ENCODE measurements at regions of chr2 and their contacts with region 1.

Region 1: DNA sequence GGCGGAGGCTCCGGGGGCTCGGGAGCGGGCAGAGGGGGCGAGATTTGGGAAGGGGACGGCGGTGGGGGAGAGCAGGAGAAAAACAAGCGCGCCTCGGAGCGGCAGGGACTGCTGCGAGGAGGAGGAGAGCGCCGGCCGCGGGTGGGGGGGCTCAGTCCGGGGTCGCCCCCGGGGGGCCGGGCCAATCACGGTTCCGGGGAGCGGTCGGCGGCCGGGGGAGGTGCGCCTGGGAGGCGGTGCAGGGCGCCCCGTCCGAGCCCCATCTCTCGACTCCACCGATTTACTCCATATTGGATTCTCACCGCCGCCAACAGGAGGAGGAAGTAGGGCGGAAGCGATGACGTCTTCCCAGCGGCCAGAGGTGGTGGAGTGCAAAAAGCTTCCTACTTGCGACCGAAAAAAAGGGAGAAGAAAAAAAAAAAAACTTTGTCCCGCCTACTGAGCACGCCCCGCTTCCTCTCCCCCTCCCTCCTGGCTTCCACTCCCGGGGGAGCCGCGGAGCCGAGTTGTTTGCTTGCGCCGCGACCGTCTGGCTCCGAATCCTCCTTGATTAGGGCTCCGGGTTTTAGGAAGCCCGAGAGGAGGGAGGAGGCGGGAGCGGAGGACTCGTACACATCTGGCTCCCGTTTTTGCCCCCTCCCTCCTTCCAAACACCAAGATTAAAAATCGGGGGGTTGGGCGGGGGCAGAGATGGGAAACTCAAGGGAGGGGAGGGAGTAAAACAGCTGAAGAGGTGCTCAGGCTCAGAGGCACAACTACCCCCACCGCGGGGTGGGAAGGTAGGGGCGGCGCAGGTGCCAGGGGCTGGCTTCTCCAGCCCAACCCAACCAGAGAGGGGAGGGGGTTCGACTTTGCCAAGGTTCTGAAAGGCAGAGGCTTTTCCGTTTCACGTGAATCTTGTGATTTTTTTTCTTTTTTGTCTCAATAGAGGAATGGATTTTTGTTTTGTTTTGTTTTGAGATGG is at the start of gene SPRED2:
- DNase-seq: no peak
- ATAC-seq: peak; percentile 38
- H3K4me3 ChIP-seq: peak within 1 kb of the TSS; percentile 80
- H3K27ac ChIP-seq: peak within 1 kb of the TSS; percentile 43
- H3K4me1 ChIP-seq: peaks cover 6% of the 10 kb centered on the region
- H3K27me3 ChIP-seq: no peaks in the 10 kb centered on the region
- CTCF ChIP-seq: no peak
- EP300 ChIP-seq: no peak
- POLR2A ChIP-seq: no peak; the same call in 1 of the 2 replicates
- RAD21 ChIP-seq: 0 out of 2 replicates have a peak, but pooled peaks have one; percentile 18
- polyA plus RNA-seq, gene SPRED2: 3.0 to 3.2 TPM

Region 2: GRCh38 chr2:65300761-65301711 is 131.5 kb before region 1 on chr2:
- CTCF ChIA-PET with region 1: interaction called, 4 read pairs
- POLR2A ChIA-PET with region 1: no interaction called
- RAD21 ChIA-PET with region 1: interaction called, 4 read pairs
- SMC1A ChIA-PET with region 1: interaction called, 22 read pairs
- in situ Hi-C with region 1: no loop called
- intact Hi-C with region 1: no loop called
- DNase-seq: peak; percentile 61
- ATAC-seq: peak; percentile 84
- H3K4me3 ChIP-seq: peak overlapping the region; percentile 17; the same call in 1 of the 2 replicates
- H3K27ac ChIP-seq: peak overlapping the region; percentile 38
- H3K4me1 ChIP-seq: peaks cover 40% of the 10 kb centered on the region
- H3K27me3 ChIP-seq: no peaks in the 10 kb centered on the region
- CTCF ChIP-seq: no peak
- EP300 ChIP-seq: no peak
- POLR2A ChIP-seq: no peak
- RAD21 ChIP-seq: no peak

Region 3: DNA sequence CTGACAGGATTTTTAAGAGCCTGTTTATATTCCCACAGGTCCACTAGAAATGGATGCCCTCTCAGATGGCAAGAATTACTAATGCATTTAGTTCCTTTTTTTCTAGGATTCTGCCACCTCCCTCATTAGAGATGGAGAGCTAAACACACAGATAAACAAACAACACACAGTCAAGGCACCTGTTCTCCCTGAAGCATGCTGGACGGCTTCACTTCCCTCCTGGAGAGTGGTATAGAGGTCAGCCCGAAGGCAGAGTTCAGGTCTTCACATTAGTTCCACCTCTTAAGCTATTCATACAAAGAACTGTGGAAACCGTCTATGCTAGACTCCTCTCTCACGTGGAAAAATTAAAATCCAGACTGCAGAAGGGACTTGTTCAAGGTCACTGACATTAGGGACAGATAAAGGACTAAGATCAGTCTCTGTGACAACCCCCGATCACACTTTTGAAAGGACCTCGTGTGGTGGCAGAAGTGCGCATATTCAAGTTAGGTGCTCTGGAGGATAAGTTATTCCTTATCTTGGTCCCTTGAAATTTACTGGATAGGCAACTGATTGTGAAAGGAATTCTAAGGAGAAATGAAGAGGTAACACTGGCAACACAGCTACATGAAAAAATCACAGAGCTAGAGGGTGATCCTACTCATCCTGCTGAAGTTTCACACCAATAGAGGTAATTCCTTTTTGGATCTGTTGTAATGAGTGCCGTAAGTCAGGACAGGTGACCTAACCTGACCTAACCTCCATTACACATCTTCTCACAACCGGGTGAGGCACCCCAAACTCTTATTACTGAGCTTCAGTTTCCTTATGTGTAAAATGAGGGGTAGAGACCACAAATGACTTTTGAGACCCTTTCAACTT is 75.2 kb before region 1 on chr2:
- CTCF ChIA-PET with region 1: interaction called, 3 read pairs
- POLR2A ChIA-PET with region 1: interaction called, 4 read pairs
- RAD21 ChIA-PET with region 1: interaction called, 12 read pairs
- SMC1A ChIA-PET with region 1: interaction called, 8 read pairs
- in situ Hi-C with region 1: no loop called
- intact Hi-C with region 1: loop called (anchors 2 kb)
- DNase-seq: no peak
- ATAC-seq: peak; percentile 75
- H3K4me3 ChIP-seq: 0 out of 2 replicates have a peak overlapping the region, but pooled peaks have one; percentile 38
- H3K27ac ChIP-seq: peak overlapping the region; percentile 75
- H3K4me1 ChIP-seq: peaks cover 41% of the 10 kb centered on the region
- H3K27me3 ChIP-seq: no peaks in the 10 kb centered on the region
- CTCF ChIP-seq: no peak
- EP300 ChIP-seq: no peak
- POLR2A ChIP-seq: no peak
- RAD21 ChIP-seq: no peak

Region 4: GRCh38 chr2:65396348-65397026 is 36.0 kb before region 1 on chr2:
- CTCF ChIA-PET with region 1: interaction called, 3 read pairs
- POLR2A ChIA-PET with region 1: interaction called, 5 read pairs
- RAD21 ChIA-PET with region 1: interaction called, 10 read pairs
- SMC1A ChIA-PET with region 1: interaction called, 13 read pairs
- in situ Hi-C with region 1: no loop called
- intact Hi-C with region 1: no loop called
- DNase-seq: no peak
- ATAC-seq: peak; percentile 31
- H3K4me3 ChIP-seq: no peak overlapping the region
- H3K27ac ChIP-seq: peak overlapping the region; percentile 22
- H3K4me1 ChIP-seq: peaks cover 53% of the 10 kb centered on the region
- H3K27me3 ChIP-seq: no peaks in the 10 kb centered on the region
- CTCF ChIP-seq: no peak
- EP300 ChIP-seq: no peak
- POLR2A ChIP-seq: no peak
- RAD21 ChIP-seq: no peak

Region 5: DNA sequence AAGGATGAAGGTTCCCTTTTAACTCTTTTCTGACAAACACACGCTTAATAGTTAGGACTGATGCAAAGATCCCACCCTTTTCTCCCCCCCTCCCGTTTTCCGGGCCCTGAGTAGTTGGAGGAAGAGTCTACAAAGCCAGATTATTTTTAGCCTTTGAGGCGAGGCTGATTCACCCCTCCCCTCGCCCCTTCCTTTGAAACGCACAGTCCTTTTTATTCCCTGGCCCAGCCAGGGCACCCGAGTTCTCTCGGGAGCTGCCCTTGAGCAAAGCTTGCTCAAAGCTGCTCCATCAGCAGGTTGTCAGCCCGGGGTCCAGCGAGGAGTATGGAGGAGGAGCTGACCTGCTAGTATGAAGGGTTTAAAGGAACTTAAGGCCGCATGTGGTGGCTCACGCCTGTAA is 47.0 kb after region 1 on chr2:
- CTCF ChIA-PET with region 1: no interaction called
- POLR2A ChIA-PET with region 1: no interaction called
- RAD21 ChIA-PET with region 1: no interaction called
- SMC1A ChIA-PET with region 1: no interaction called
- in situ Hi-C with region 1: no loop called
- intact Hi-C with region 1: no loop called
- DNase-seq: no peak
- ATAC-seq: no peak
- H3K4me3 ChIP-seq: no peak overlapping the region
- H3K27ac ChIP-seq: no peak overlapping the region
- H3K4me1 ChIP-seq: no peaks in the 10 kb centered on the region
- H3K27me3 ChIP-seq: peaks cover 0 to 2% of the 10 kb centered on the region in 2 experiments; a peak in 1 of 4 replicates
- CTCF ChIP-seq: no peak
- EP300 ChIP-seq: no peak
- POLR2A ChIP-seq: no peak
- RAD21 ChIP-seq: no peak

Region 6: GRCh38 chr2:65536596-65536995 is 104.1 kb after region 1 on chr2:
- CTCF ChIA-PET with region 1: interaction called, 4 read pairs
- POLR2A ChIA-PET with region 1: interaction called, 4 read pairs
- RAD21 ChIA-PET with region 1: interaction called, 8 read pairs
- SMC1A ChIA-PET with region 1: interaction called, 3 read pairs
- in situ Hi-C with region 1: no loop called
- intact Hi-C with region 1: loop called (anchors 2 kb)
- DNase-seq: peak; percentile 64
- ATAC-seq: peak; percentile 96
- H3K4me3 ChIP-seq: no peak overlapping the region
- H3K27ac ChIP-seq: no peak overlapping the region
- H3K4me1 ChIP-seq: peaks cover 10% of the 10 kb centered on the region; the same call in 1 of the 2 replicates
- H3K27me3 ChIP-seq: peaks cover 0 to 1% of the 10 kb centered on the region in 2 experiments; a peak in 2 of 4 replicates
- CTCF ChIP-seq: no peak
- EP300 ChIP-seq: no peak
- POLR2A ChIP-seq: no peak
- RAD21 ChIP-seq: no peak